ENCODE measurements at regions of chr11 and their contacts with region 1.

Region 1: GRCh38 chr11:122578168-122578825 is 77.2 kb upstream of the UBASH3B start:
- DNase-seq: no peak
- H3K4me3 ChIP-seq: no peak overlapping the region
- H3K27ac ChIP-seq: no peak overlapping the region
- H3K4me1 ChIP-seq: peaks cover 0 to 2% of the 10 kb centered on the region in 2 experiments; a peak in 1 of 4 replicates
- H3K27me3 ChIP-seq: no peaks in the 10 kb centered on the region
- CTCF ChIP-seq: peak; percentile 36
- EP300 ChIP-seq: no peak
- RAD21 ChIP-seq: peak; percentile 34

Region 2: DNA sequence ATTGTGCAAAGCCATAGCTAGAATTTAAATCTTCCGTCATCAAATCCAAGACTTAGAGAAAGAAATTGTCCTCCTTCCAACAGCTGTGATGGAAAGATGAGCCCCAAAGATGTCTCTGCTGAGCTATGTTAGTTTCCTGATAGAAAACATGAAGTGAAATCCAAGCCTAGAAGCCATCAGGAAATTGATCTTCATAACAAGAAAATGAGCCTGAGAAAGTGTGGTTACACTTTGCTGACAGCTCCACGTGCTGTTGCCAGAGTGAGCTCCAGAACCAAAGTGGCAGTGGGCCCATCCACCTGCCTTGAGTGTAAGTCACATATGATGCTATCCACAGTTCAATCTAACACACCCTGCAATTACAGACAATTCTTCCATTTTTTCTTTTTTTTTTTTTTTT is 19.2 kb after region 1 on chr11:
- CTCF ChIA-PET with region 1: interaction called, 21 read pairs
- POLR2A ChIA-PET with region 1: no interaction called
- DNase-seq: no peak
- H3K4me3 ChIP-seq: no peak overlapping the region
- H3K27ac ChIP-seq: no peak overlapping the region
- H3K4me1 ChIP-seq: no peaks in the 10 kb centered on the region; a peak in 1 of 4 replicates
- H3K27me3 ChIP-seq: peaks cover 5% of the 10 kb centered on the region; the same call in 1 of the 2 replicates
- CTCF ChIP-seq: no peak
- EP300 ChIP-seq: no peak
- RAD21 ChIP-seq: no peak

Region 3: DNA sequence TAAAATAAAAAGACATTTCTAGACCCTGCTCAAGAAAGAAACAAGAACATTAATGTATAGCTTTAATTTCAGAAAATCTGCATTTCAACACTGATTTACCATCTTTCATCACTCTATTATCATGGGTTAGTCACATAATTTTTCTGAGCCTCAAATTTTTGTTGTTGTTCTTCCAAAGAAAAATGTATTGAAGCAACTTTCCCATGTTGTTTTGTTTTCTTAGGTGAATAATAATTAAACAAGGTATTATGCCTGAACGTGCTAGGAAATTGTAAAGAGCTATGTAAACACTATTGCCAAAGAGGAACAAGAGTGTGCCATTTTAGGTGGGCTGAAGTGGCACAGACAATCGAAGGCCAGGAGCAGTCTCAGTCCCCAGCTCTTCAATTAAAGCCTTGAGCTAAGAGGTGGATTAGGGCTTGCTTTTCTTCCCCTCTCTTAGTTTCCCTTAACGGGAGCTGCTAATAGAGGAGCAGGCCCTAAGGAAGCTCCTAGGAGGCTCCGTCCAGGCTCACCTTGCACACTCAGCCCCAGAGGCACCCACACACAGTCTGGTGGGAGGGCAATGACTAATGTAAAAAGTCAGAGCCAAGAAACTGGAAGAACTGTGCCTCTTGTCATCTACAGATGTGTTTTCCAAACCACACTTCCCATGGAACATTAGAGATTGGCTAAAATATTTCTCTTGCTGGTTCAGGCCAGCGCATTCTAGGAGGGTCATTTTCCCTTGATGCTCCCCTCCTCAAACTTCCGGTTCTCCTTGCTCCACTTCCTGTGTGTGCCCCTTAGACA is 68.4 kb after region 1 on chr11:
- CTCF ChIA-PET with region 1: no interaction called
- POLR2A ChIA-PET with region 1: no interaction called
- DNase-seq: no peak
- H3K4me3 ChIP-seq: no peak overlapping the region
- H3K27ac ChIP-seq: peak overlapping the region in 1 of 2 experiments; percentile 70; a peak in 2 of 4 replicates
- H3K4me1 ChIP-seq: peaks cover 0 to 21% of the 10 kb centered on the region in 2 experiments; a peak in 2 of 4 replicates
- H3K27me3 ChIP-seq: no peaks in the 10 kb centered on the region
- CTCF ChIP-seq: no peak
- EP300 ChIP-seq: no peak
- RAD21 ChIP-seq: no peak

Measured in SK-N-SH (cell line).